ENCODE measurements at regions of chr3 and their contacts with region 1.

Region 1: DNA sequence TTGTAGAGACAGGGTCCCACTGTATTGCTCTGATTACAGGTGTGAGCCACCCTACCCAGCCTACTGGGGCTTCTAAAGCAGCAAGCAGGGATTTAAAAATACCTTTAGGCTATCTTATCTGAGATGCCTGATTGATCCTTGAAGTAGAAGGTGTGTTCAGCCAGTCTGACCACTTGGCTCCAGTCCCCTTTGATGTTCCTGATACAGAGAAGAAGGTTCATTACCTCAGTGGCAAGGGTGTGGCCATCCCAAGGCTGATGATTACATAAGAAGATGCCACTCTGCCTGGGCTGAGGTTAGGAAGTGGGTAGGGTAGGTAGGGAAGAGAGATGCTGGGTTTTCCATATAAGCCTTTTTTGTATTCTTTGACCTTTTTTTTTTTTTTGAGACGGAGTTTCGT is 11.2 kb upstream of the DCAF1 start:
- DNase-seq: no peak
- ATAC-seq: no peak

Region 2: GRCh38 chr3:51535146-51536019 is 24.4 kb after region 1 on chr3:
- intact Hi-C with region 1: loop called (anchors 1 kb)
- DNase-seq: no peak
- ATAC-seq: no peak

Measured in sciatic nerve (tissue), 2 donors.